CD4-positive, alpha-beta memory T cell (primary cell): ENCODE measurements at regions of chr9 and their contacts with region 1.

Region 1: GRCh38 chr9:112361601-112362000 is 18.3 kb upstream of the HSDL2 start:
- DNase-seq: peak in 4 of 5 donors; percentile 42 to 48 (median 46)
- H3K4me3 ChIP-seq: no peak overlapping the region
- H3K4me3 Mint-ChIP-seq: no peak overlapping the region
- H3K27ac ChIP-seq: no peak overlapping the region
- H3K27ac Mint-ChIP-seq: no peak overlapping the region
- H3K4me1 ChIP-seq: no peaks in the 10 kb centered on the region
- H3K4me1 Mint-ChIP-seq: peaks cover 0 to 2% (median 1%) of the 10 kb centered on the region in 4 donors
- H3K27me3 ChIP-seq: no peaks in the 10 kb centered on the region
- H3K27me3 Mint-ChIP-seq: peaks cover 2 to 5% of the 10 kb centered on the region in 2 donors

Region 2: DNA sequence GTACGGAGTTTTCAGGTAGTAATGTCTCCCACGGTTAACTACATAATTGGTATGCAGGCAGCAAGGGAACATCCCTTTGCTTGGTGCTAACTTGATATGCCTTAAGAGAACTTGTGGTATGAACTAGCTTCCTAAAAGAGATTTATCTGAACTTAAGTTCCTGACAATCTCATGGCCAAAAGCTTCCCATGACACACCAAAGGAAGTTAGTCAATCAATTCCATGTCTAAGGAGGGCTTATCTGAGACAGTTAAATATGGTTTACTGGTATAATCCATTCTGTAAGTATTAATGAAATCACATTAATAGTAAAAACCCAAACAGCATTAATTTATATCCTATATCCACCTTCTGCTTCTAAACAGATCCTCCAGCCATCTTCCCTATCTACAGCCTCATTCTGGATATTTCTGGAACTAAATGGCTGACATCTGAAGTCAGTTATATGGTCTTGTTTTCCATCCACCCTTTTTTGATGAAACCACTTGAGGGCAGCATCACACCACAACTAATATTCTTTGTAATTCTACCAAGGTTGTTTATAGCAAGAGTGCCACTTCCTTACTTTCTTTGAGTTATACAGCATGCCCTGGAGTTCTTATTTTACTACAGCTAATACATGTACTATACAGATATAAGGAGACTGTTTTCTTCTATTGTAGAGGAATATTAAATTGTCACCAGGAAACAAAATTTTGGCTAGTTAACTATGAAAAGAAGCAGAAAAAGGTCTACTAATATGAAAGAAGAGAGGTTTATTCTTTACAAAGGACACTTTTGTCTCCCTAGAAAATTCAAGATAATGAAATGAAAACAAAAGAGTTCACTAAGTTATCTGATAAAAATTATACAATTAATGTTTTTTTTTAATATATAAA is 601.6 kb before region 1 on chr9:
- CTCF ChIA-PET with region 1: interaction called, 26 read pairs
- POLR2A ChIA-PET with region 1: no interaction called
- intact Hi-C with region 1: loop called (anchors 1 kb)
- DNase-seq: peak; percentile 56 to 70 (median 68)
- H3K4me3 ChIP-seq: no peak overlapping the region
- H3K4me3 Mint-ChIP-seq: no peak overlapping the region
- H3K27ac ChIP-seq: no peak overlapping the region
- H3K27ac Mint-ChIP-seq: no peak overlapping the region
- H3K4me1 ChIP-seq: no peaks in the 10 kb centered on the region
- H3K4me1 Mint-ChIP-seq: peaks cover 0 to 4% (median 2%) of the 10 kb centered on the region in 4 donors
- H3K27me3 ChIP-seq: no peaks in the 10 kb centered on the region
- H3K27me3 Mint-ChIP-seq: no peaks in the 10 kb centered on the region

Region 3: DNA sequence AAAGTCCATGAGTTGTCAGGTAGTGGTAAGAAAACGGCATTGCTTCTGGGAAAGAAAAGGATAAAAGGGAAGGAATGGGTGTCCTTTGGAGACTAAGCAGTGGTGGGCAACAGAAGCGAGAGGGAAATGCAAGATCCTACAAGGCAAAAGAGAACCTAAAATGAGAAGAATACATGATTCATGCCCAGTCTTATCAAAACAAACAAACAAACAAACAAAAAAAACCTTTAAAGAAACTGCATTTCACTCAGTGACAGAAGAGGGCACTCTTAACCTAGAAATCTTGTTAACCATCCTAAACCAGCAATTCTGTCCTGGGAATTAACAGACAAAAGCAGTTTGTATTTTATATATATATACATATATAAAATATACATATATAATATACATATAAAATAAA is 275.0 kb before region 1 on chr9:
- CTCF ChIA-PET with region 1: interaction called, 102 read pairs
- POLR2A ChIA-PET with region 1: no interaction called
- intact Hi-C with region 1: loop called (anchors 1 kb)
- DNase-seq: peak in 2 of 5 donors; percentile 12 to 17
- H3K4me3 ChIP-seq: no peak overlapping the region
- H3K4me3 Mint-ChIP-seq: no peak overlapping the region
- H3K27ac ChIP-seq: no peak overlapping the region
- H3K27ac Mint-ChIP-seq: peak overlapping the region in 1 of 7 donors; percentile 11
- H3K4me1 ChIP-seq: no peaks in the 10 kb centered on the region
- H3K4me1 Mint-ChIP-seq: no peaks in the 10 kb centered on the region
- H3K27me3 ChIP-seq: no peaks in the 10 kb centered on the region
- H3K27me3 Mint-ChIP-seq: no peaks in the 10 kb centered on the region

Region 4: DNA sequence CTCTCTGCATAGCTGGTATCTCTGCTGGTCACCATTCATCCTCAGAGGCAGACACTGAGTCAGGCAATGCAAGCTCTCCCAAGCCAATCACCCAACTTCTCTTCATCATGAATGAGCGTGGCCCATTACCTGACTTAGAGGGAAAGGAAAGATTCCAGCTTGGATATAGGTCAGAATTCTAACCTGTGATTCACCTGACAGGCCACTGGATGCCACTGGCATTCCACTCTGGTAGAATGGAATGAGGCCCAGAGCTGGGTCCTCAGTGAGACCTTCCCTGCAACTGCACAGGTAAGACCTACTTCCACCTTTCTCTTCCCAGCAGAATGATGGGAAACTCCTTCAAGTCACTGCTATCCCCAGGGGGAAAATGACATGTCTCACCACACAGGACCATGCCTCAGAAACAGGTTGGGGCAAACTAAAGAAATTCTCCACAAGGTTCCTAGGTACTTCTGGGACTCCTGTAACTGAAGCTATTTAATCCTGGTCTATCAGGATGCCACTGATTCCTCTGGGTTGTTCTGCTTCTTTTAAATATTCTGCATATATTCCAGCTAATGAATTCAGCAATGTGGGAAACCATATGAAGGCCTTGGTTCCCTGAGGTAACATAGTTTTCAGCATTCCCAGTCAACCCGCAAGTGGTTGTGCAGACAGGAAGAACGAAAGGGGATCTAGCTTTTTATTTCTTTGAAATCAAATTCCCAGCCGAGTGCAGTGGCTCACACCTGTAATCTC is 248.5 kb before region 1 on chr9:
- CTCF ChIA-PET with region 1: interaction called, 84 read pairs
- POLR2A ChIA-PET with region 1: interaction called, 13 read pairs
- intact Hi-C with region 1: loop called (anchors 1 kb)
- DNase-seq: peak in 4 of 5 donors; percentile 18 to 28 (median 25)
- H3K4me3 ChIP-seq: no peak overlapping the region
- H3K4me3 Mint-ChIP-seq: no peak overlapping the region
- H3K27ac ChIP-seq: no peak overlapping the region
- H3K27ac Mint-ChIP-seq: peak overlapping the region in 1 of 7 donors; percentile 15
- H3K4me1 ChIP-seq: no peaks in the 10 kb centered on the region
- H3K4me1 Mint-ChIP-seq: no peaks in the 10 kb centered on the region
- H3K27me3 ChIP-seq: no peaks in the 10 kb centered on the region
- H3K27me3 Mint-ChIP-seq: no peaks in the 10 kb centered on the region

Region 5: GRCh38 chr9:112443200-112443599 is 81.6 kb after region 1 on chr9:
- CTCF ChIA-PET with region 1: no interaction called
- POLR2A ChIA-PET with region 1: no interaction called
- intact Hi-C with region 1: no loop called
- DNase-seq: peak in 4 of 5 donors; percentile 14 to 28 (median 24)
- H3K4me3 ChIP-seq: no peak overlapping the region
- H3K4me3 Mint-ChIP-seq: no peak overlapping the region
- H3K27ac ChIP-seq: no peak overlapping the region
- H3K27ac Mint-ChIP-seq: no peak overlapping the region
- H3K4me1 ChIP-seq: no peaks in the 10 kb centered on the region
- H3K4me1 Mint-ChIP-seq: peaks cover 0 to 2% (median 0%) of the 10 kb centered on the region in 4 donors
- H3K27me3 ChIP-seq: no peaks in the 10 kb centered on the region
- H3K27me3 Mint-ChIP-seq: no peaks in the 10 kb centered on the region